K562 (cell line): ENCODE measurements at regions of chr15 and their contacts with region 1.

Region 1: DNA sequence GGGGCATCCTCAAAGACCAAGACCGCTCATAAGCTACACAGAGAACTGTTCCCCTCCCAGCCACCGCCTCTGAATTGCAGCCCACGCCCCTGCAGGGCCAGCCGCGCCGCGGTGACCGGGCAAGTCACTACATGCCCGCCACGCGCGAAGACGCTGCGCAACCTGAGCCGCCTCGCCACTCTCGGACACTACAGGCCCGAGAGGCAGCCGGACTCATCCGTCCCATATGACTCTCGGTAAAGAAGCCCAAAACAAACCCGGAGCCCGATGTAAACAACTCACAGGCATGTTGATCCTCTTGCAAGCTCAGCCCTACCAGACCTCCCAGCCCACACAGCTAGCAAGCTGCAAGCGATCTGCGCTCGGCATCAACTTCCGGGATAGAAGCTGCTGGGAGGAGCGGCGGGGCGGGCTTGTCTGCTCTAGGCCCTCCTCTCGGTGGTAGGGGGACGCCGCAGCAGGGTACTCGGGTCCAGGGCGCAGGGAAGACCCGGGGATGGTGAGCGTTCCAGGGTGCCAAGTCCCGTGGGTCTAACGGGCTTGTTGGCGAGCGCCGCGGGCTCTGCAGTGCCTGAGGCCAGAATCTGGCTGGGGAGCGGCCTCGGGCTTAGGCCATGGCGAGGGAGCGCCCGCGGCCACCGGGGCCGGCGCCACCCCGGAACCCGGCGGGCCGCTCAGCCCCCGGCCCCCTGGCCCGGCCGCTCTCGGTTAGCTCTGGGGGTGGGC is at the start of gene RPS27L:
- DNase-seq: peak; percentile 84 to 95 (median 86)
- ATAC-seq: peak; percentile 97
- H3K4me3 ChIP-seq: peak within 1 kb of the TSS; percentile 57
- H3K27ac ChIP-seq: peak within 1 kb of the TSS; percentile 80
- H3K4me1 ChIP-seq: peaks cover 4 to 12% of the 10 kb centered on the region in 2 experiments; a peak in 3 of 5 replicates
- H3K27me3 ChIP-seq: no peaks in the 10 kb centered on the region
- CTCF ChIP-seq: peak in 1 of 3 experiments; percentile 4; a peak in 1 of 6 replicates
- EP300 ChIP-seq: peak; percentile 8; the same call in 1 of the 2 replicates
- POLR2A ChIP-seq: peak; percentile 97
- RAD21 ChIP-seq: peak in 1 of 2 experiments; percentile 7; a peak in 1 of 4 replicates
- polyA plus RNA-seq, gene RPS27L: 328 to 382 TPM

Region 2: GRCh38 chr15:63109920-63110319 is 47.4 kb before region 1 on chr15:
- CTCF ChIA-PET with region 1: no interaction called
- POLR2A ChIA-PET with region 1: no interaction called
- in situ Hi-C with region 1: no loop called
- intact Hi-C with region 1: loop called (anchors 5 kb)
- DNase-seq: peak; percentile 76 to 94 (median 85)
- ATAC-seq: peak; percentile 96
- H3K4me3 ChIP-seq: no peak overlapping the region
- H3K27ac ChIP-seq: no peak overlapping the region
- H3K4me1 ChIP-seq: peaks cover 0 to 30% of the 10 kb centered on the region in 2 experiments; a peak in 4 of 5 replicates
- H3K27me3 ChIP-seq: no peaks in the 10 kb centered on the region
- CTCF ChIP-seq: no peak
- EP300 ChIP-seq: peak; percentile 72
- POLR2A ChIP-seq: no peak
- RAD21 ChIP-seq: no peak

Region 3: DNA sequence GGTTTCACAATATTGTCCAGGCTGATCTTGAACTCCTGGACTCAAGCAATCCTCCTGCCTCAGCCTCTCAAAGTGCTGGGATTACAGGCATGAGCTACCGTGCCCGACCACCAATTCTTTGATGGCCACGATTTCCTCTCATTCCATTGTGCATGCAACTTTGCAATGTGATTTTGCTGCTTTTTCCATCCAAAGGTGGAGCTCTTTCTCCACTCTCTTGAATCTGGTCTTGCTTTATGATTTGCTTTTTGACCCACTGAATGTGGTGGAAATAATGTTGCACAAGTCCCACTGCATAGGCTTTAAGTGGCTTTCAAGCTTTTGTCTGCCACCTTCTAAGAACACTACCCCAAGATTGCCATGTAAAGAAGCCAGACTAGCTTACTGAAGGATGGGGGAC is 10.6 kb before region 1 on chr15:
- CTCF ChIA-PET with region 1: no interaction called
- POLR2A ChIA-PET with region 1: interaction called, 11 read pairs
- in situ Hi-C with region 1: no loop called
- intact Hi-C with region 1: no loop called
- DNase-seq: no peak
- ATAC-seq: no peak; the same call in 2 of the 3 replicates
- H3K4me3 ChIP-seq: no peak overlapping the region
- H3K27ac ChIP-seq: no peak overlapping the region
- H3K4me1 ChIP-seq: no peaks in the 10 kb centered on the region
- H3K27me3 ChIP-seq: no peaks in the 10 kb centered on the region
- CTCF ChIP-seq: peak in 1 of 3 experiments; percentile 20; a peak in 2 of 6 replicates
- EP300 ChIP-seq: no peak
- POLR2A ChIP-seq: no peak
- RAD21 ChIP-seq: peak in 1 of 2 experiments; percentile 38; a peak in 2 of 4 replicates

Region 4: DNA sequence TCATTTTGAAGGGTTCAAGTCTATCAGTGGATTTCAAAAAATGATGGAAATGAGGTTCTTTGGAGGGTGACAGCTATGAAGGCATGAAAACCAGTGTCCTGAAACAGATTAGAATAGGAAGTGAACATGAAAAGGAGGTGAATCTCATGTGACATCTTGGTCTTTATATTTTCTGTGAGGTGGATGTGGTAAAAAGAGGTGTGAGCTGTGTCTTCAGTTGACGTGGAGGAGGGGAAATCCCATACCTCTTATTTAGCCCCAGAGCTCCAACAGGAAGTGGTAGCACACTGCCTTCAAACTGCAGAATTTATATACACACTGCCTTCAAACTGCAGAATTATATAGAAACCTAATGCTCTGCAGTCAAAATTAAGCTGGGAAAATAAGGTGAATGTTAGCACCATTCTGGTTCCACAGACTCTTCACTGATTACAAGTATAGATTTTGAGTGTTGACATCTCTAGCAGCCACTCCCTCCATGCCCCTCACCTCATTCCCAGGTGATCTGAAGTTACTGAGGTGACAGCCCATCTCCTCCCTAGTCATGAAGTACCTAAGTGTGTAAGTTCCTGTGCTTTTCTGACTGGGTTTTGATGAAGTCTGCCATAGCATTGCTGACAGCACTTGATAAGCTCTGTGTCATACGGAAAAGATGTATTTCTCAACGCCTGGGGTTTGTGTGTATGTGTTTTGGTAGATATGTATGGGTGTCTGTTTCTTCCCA is 34.8 kb after region 1 on chr15:
- CTCF ChIA-PET with region 1: no interaction called
- POLR2A ChIA-PET with region 1: interaction called, 3 read pairs
- in situ Hi-C with region 1: no loop called
- intact Hi-C with region 1: loop called (anchors 5 kb)
- DNase-seq: peak in 2 of 4 experiments; percentile 47 to 80
- ATAC-seq: peak; percentile 23
- H3K4me3 ChIP-seq: no peak overlapping the region
- H3K27ac ChIP-seq: peak overlapping the region; percentile 80
- H3K4me1 ChIP-seq: peaks cover 14 to 61% of the 10 kb centered on the region in 2 experiments
- H3K27me3 ChIP-seq: no peaks in the 10 kb centered on the region
- CTCF ChIP-seq: no peak
- EP300 ChIP-seq: peak; percentile 71; the same call in 1 of the 2 replicates
- POLR2A ChIP-seq: no peak
- RAD21 ChIP-seq: no peak; a peak in 1 of 4 replicates

Region 5: DNA sequence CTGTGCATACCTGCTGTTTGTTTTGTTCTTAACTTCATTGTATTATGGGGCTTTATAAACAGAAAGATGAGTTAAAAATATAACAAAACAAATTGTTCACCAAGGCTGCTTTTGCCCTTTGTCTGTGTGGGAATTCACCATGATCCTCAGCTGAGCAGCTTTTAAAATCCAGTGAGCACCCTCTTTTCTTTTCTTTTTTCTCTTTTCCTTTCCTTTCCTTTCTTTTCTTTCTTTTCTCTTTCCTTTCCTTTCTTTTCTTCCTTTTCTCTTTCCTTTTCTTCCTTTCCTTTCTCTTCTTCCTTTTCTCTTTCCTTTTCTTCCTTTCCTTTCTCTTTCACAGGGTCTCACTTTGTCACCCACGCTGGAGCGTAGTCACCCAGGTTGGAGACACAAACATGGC is 70.4 kb after region 1 on chr15:
- CTCF ChIA-PET with region 1: no interaction called
- POLR2A ChIA-PET with region 1: no interaction called
- in situ Hi-C with region 1: no loop called
- intact Hi-C with region 1: no loop called
- DNase-seq: no peak
- ATAC-seq: no peak
- H3K4me3 ChIP-seq: no peak overlapping the region
- H3K27ac ChIP-seq: peak overlapping the region; percentile 82; the same call in 1 of the 3 replicates
- H3K4me1 ChIP-seq: peaks cover 0 to 19% of the 10 kb centered on the region in 2 experiments; a peak in 3 of 5 replicates
- H3K27me3 ChIP-seq: no peaks in the 10 kb centered on the region
- CTCF ChIP-seq: no peak
- EP300 ChIP-seq: no peak
- POLR2A ChIP-seq: no peak
- RAD21 ChIP-seq: no peak

Region 6: GRCh38 chr15:63277038-63277892 is 120.0 kb after region 1 on chr15 and contains the start of gene APH1B:
- CTCF ChIA-PET with region 1: no interaction called
- POLR2A ChIA-PET with region 1: no interaction called
- in situ Hi-C with region 1: no loop called
- intact Hi-C with region 1: loop called (anchors 2 kb)
- DNase-seq: peak; percentile 89 to 96 (median 94)
- ATAC-seq: peak; percentile 93
- H3K4me3 ChIP-seq: peak within 1 kb of the TSS; percentile 65
- H3K27ac ChIP-seq: peak within 1 kb of the TSS; percentile 82
- H3K4me1 ChIP-seq: peaks cover 12 to 18% of the 10 kb centered on the region in 2 experiments; a peak in 4 of 5 replicates
- H3K27me3 ChIP-seq: no peaks in the 10 kb centered on the region
- CTCF ChIP-seq: 0 out of 6 replicates have a peak, but pooled peaks of 2 of the 3 experiments have one; percentile 2 to 14
- EP300 ChIP-seq: no peak
- POLR2A ChIP-seq: peak; percentile 87; the same call in 1 of the 2 replicates
- RAD21 ChIP-seq: 0 out of 4 replicates have a peak, but pooled peaks of 1 of the 2 experiments have one; percentile 19
- polyA plus RNA-seq, gene APH1B: 7.0 to 8.7 TPM